OCI-LY7 (cell line): ENCODE measurements at regions of chr7 and their contacts with region 1.

Region 1: GRCh38 chr7:32846701-32847100 is 44.9 kb downstream of the KBTBD2 start:
- DNase-seq: peak; percentile 90
- H3K4me3 ChIP-seq: no peak overlapping the region
- H3K27ac ChIP-seq: no peak overlapping the region
- H3K4me1 ChIP-seq: peaks cover 4% of the 10 kb centered on the region
- CTCF ChIP-seq: peak; percentile 97

Region 2: DNA sequence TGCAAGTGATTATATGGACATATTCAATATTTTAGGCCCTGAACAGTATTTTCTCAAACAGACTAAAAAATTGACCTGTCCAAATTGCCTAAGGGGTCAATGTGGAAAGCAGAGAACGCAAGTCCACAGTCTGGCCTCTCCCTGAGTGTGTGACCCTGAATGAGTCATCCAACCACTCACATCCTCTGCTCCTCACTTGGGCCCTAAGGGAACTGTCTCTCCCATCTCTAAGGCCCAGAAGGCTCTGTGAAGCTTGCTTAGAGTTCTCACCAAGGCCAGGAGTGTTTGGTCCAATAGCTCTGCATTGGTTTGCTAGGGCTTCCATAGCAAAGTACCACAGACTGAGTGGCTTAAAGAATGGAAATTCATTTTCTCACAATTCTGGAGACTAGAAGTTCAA is 511.6 kb before region 1 on chr7:
- CTCF ChIA-PET with region 1: no interaction called
- POLR2A ChIA-PET with region 1: no interaction called
- intact Hi-C with region 1: no loop called
- DNase-seq: no peak
- H3K4me3 ChIP-seq: no peak overlapping the region
- H3K27ac ChIP-seq: no peak overlapping the region
- H3K4me1 ChIP-seq: no peaks in the 10 kb centered on the region
- CTCF ChIP-seq: no peak

Region 3: DNA sequence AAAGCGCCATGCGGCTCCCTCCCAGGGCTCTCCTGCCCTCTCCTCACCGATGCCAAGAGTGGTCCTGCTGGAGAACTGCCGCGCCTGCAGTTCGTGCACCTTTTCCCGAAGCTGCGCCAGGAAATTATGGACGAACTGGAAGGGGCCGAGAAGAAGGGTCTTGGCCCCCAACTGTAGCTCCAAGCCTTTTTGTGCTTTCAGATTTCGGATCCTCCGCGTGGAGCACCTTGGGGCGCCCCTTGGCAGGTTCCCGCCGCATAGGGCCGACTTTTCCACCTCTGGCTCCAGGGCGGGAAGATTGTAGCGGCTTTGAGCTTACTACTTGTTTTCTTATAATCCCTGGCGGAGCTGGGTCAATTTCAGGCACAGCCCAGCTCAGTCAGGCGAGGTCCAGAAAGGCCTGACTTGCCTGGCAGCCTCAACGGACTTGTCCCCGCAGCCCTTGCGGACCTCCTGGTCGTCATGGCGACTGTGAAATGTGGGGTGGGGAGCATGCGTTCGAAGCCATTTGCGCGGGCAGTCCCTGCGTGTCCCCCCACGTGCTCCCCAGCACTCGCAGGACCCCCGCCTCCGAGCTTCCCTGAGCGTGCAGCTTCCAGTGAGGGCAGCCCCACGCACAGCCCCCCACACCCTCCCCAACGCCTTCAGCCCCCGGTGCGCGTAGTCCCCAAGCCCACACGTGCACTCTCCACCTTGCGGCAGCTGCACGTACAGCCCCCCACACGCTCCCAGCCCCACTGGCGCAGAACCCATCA is 85.1 kb before region 1 on chr7:
- CTCF ChIA-PET with region 1: no interaction called
- POLR2A ChIA-PET with region 1: no interaction called
- intact Hi-C with region 1: loop called (anchors 5 kb)
- DNase-seq: no peak
- H3K4me3 ChIP-seq: no peak overlapping the region
- H3K27ac ChIP-seq: no peak overlapping the region
- H3K4me1 ChIP-seq: no peaks in the 10 kb centered on the region
- CTCF ChIP-seq: no peak

Region 4: DNA sequence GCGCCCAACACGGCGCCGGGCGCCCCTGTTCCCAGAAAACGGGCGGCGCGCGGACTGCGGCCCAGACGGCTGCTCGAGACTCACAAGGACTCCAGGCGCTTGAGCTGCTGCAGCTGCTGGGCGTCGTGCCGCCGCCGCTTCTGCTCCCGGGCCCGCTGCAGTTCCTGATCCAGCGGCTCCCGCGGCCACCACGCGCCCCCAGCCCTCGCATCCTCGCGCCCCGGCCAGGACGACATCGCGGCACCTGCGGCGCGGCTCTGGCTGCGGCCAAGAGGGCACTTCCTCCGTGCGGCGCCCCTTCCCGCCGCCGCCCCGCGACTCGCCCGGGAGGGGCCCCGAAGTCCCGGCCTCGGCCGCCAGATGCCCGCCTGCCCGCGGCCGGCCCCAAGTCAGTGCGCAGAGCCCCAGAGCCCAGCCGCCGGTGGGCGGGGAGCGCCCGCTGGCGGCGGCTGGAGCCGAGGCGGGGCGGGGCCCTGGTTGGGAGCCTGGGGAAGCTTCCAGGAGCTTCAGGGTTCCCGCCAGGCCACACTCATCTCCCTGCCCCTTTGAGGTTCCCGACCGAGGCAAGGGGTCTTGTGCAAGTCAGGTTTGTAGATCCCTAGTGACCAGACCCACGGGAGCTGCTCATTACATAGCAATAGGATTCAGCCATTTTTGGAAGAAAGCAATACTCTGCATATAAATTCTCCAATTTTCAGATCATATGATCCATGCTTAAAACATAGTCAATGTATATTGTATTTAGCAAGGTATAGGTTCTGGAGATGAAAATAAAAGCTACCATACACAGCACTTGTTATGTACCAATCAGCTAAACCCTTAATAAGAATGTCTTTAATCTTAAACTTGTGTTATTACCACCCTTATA is 96.3 kb after region 1 on chr7:
- CTCF ChIA-PET with region 1: interaction called, 5 read pairs
- POLR2A ChIA-PET with region 1: interaction called, 3 read pairs
- intact Hi-C with region 1: loop called (anchors 1 kb)
- DNase-seq: peak; percentile 41
- H3K4me3 ChIP-seq: peak overlapping the region; percentile 29
- H3K27ac ChIP-seq: no peak overlapping the region
- H3K4me1 ChIP-seq: no peaks in the 10 kb centered on the region
- CTCF ChIP-seq: peak; percentile 63

Region 5: DNA sequence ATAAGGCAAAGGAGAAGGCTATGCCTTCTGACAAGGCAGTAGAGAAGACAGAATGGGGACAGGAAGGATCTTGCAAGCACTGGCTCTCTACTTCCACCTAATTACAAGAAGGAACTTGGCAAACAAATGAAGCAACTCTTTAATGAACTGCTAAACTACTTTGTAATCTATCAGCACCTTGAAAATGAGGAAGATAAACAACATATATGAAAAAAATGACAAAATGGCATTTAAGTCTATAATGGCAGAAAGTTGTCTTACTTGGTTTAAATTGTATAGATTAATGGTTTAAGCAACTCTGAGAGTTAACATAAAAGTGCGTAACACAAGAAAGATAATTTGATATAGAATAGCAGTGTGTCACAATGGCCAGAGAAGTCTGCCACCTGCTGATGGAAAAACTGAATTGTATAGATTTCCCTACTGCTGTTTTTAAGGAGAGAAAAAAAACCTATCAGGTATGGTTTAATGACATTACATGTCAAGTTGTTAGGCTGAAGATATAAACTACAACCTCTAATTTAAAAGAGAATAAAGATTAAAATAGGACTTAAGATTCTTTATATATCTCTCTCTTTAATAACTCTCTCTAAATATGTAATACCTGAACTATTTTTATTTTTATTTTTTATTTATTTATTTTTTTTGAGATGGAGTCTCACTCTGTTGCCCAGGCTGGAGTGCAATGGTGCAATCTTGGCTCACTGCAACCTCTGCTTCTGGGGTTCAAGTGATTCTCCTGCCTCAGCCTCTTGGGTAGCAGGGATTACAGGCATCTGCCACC is 204.0 kb after region 1 on chr7:
- CTCF ChIA-PET with region 1: no interaction called
- POLR2A ChIA-PET with region 1: no interaction called
- intact Hi-C with region 1: loop called (anchors 2 kb)
- DNase-seq: peak; percentile 60
- H3K4me3 ChIP-seq: peak overlapping the region; percentile 46
- H3K27ac ChIP-seq: peak overlapping the region; percentile 78
- H3K4me1 ChIP-seq: peaks cover 78% of the 10 kb centered on the region
- CTCF ChIP-seq: peak; percentile 91